CD8-positive, alpha-beta T cell (primary cell): ENCODE measurements at regions of chr11 and their contacts with region 1.

Region 1: DNA sequence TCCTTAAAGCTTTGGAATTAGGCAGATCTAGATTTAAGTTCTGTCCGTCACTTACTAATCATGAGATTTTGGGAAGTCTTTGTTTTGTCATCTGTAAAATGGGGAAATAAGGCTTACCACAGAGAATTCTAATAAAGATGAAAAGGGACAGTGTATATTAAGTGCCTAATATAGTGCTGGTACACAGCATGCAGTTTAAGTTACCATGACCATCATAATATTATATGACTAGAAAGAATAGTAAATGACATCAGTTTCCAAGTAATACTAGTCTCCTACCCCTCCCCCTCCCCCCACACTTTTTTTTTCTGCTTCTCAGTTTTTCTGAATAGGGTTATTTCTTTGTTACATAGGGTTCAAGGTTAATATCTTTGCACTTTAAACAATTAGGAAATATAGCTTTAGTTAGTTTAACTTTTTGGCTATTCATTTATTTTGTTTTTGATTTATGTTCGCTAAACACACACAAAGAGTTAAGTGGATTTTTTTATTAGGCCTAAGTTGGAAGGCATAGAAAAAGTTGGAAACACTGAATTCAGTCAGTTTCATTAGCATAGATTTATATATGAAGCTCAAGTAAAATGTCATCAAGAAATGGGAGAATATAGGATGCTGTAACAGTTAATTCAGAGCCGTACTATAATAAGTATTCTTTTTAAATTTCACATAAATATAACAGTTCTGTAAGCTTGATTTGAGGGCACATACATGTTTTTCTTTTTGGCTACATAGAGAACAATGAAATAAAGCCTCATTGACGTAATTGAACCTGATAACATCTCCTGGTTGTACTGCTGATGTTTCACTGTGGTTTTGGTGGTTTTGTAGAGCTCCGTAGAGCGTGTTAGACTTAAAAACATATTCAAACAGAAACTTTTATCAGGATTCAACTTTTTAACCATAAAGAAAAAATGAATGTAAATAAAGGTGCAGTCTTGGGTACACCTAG is 121.2 kb downstream of the PDE3B start:
- DNase-seq: peak in 5 of 9 experiments; percentile 22 to 96 (median 59)
- ATAC-seq: peak; percentile 75
- H3K4me3 ChIP-seq: peak overlapping the region in 1 of 2 experiments; percentile 3
- H3K4me3 Mint-ChIP-seq: peak overlapping the region; percentile 72
- H3K27ac ChIP-seq: peak overlapping the region; percentile 36 to 61
- H3K27ac Mint-ChIP-seq: no peak overlapping the region
- H3K4me1 ChIP-seq: peaks cover 86% of the 10 kb centered on the region
- H3K4me1 Mint-ChIP-seq: peaks cover 48% of the 10 kb centered on the region
- H3K27me3 ChIP-seq: peaks cover 0 to 3% of the 10 kb centered on the region in 2 experiments
- H3K27me3 Mint-ChIP-seq: no peaks in the 10 kb centered on the region
- CTCF ChIP-seq: no peak

Region 2: GRCh38 chr11:14519917-14520746 is 244.7 kb before region 1 on chr11 and contains the start of gene PSMA1:
- CTCF ChIA-PET with region 1: no interaction called
- POLR2A ChIA-PET with region 1: interaction called, 3 read pairs
- intact Hi-C with region 1: loop called (anchors 1 to 5 kb)
- DNase-seq: peak; percentile 74 to 95 (median 90)
- ATAC-seq: peak; percentile 90
- H3K4me3 ChIP-seq: peak within 1 kb of the TSS; percentile 82 to 84
- H3K4me3 Mint-ChIP-seq: peak within 1 kb of the TSS; percentile 98
- H3K27ac ChIP-seq: peak within 1 kb of the TSS; percentile 82 to 87
- H3K27ac Mint-ChIP-seq: peak within 1 kb of the TSS; percentile 97
- H3K4me1 ChIP-seq: peaks cover 19% of the 10 kb centered on the region
- H3K4me1 Mint-ChIP-seq: peaks cover 32% of the 10 kb centered on the region
- H3K27me3 ChIP-seq: no peaks in the 10 kb centered on the region
- H3K27me3 Mint-ChIP-seq: no peaks in the 10 kb centered on the region
- CTCF ChIP-seq: no peak
- total RNA-seq, gene PSMA1: 177 to 193 TPM

Region 3: DNA sequence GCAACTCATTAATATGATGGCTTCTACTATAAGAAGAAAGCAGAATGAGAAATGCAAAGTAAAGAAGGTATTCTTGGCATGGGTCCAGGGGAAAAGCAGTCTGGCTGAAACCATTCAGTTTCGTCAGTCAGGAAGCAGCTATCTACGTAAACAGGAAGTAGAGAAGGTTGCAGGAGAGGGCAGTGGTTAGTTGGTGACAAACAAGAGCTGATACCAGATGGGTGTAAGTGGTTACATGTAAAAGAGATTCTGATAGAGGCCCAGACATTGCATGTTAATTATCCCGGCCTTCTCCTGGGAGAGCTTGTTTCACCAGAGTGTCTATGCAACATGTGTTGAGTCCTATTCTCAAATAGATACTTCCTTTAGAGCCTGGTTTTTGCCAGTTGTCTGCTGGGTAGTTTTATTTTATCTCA is 186.3 kb before region 1 on chr11:
- CTCF ChIA-PET with region 1: interaction called, 5 read pairs
- POLR2A ChIA-PET with region 1: interaction called, 11 read pairs
- intact Hi-C with region 1: loop called (anchors 1 to 2 kb)
- DNase-seq: peak; percentile 32 to 98 (median 74)
- ATAC-seq: peak; percentile 90
- H3K4me3 ChIP-seq: no peak overlapping the region
- H3K4me3 Mint-ChIP-seq: peak overlapping the region; percentile 56
- H3K27ac ChIP-seq: peak overlapping the region; percentile 58 to 85
- H3K27ac Mint-ChIP-seq: peak overlapping the region; percentile 96
- H3K4me1 ChIP-seq: peaks cover 42% of the 10 kb centered on the region
- H3K4me1 Mint-ChIP-seq: peaks cover 64% of the 10 kb centered on the region
- H3K27me3 ChIP-seq: no peaks in the 10 kb centered on the region
- H3K27me3 Mint-ChIP-seq: no peaks in the 10 kb centered on the region
- CTCF ChIP-seq: no peak

Region 4: DNA sequence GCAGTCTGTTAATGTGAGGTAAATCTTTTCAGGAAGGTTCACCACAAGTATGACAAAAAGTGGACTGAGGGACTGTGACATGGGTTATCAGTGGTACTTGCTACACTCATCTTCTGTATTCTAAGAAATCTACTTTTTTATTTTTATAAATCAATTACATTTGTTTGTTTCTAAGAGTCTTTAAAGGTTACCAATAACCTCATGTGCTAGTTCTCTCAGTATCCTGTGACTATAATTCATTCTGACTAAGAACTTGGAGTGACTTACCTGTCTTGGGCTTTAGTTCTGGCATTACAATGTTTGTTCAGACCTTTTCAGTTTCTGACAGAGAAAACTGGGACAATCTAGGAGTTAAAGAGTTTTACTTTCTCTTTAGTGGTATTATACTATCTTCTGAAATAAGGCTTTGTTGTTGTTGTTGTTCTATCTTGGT is 12.9 kb before region 1 on chr11:
- CTCF ChIA-PET with region 1: no interaction called
- POLR2A ChIA-PET with region 1: interaction called, 5 read pairs
- intact Hi-C with region 1: loop called in 1 of 2 experiments (anchors 2 kb)
- DNase-seq: no peak
- ATAC-seq: peak; percentile 39
- H3K4me3 ChIP-seq: no peak overlapping the region
- H3K4me3 Mint-ChIP-seq: peak overlapping the region; percentile 40
- H3K27ac ChIP-seq: no peak overlapping the region
- H3K27ac Mint-ChIP-seq: peak overlapping the region; percentile 83
- H3K4me1 ChIP-seq: peaks cover 52% of the 10 kb centered on the region
- H3K4me1 Mint-ChIP-seq: peaks cover 63% of the 10 kb centered on the region
- H3K27me3 ChIP-seq: no peaks in the 10 kb centered on the region
- H3K27me3 Mint-ChIP-seq: no peaks in the 10 kb centered on the region
- CTCF ChIP-seq: no peak

Region 5: GRCh38 chr11:14835491-14836105 is 70.7 kb after region 1 on chr11:
- CTCF ChIA-PET with region 1: no interaction called
- POLR2A ChIA-PET with region 1: no interaction called
- intact Hi-C with region 1: no loop called
- DNase-seq: no peak
- ATAC-seq: no peak
- H3K4me3 ChIP-seq: no peak overlapping the region
- H3K4me3 Mint-ChIP-seq: no peak overlapping the region
- H3K27ac ChIP-seq: no peak overlapping the region
- H3K27ac Mint-ChIP-seq: no peak overlapping the region
- H3K4me1 ChIP-seq: no peaks in the 10 kb centered on the region
- H3K4me1 Mint-ChIP-seq: no peaks in the 10 kb centered on the region
- H3K27me3 ChIP-seq: no peaks in the 10 kb centered on the region
- H3K27me3 Mint-ChIP-seq: no peaks in the 10 kb centered on the region
- CTCF ChIP-seq: no peak

Region 6: GRCh38 chr11:14892036-14892567 is 127.2 kb after region 1 on chr11 and contains the start of gene CYP2R1:
- CTCF ChIA-PET with region 1: no interaction called
- POLR2A ChIA-PET with region 1: interaction called, 8 read pairs
- intact Hi-C with region 1: loop called (anchors 2 to 5 kb)
- DNase-seq: peak; percentile 81 to 95 (median 89)
- ATAC-seq: peak; percentile 74
- H3K4me3 ChIP-seq: peak within 1 kb of the TSS; percentile 68 to 75
- H3K4me3 Mint-ChIP-seq: peak within 1 kb of the TSS; percentile 88
- H3K27ac ChIP-seq: peak within 1 kb of the TSS; percentile 49 to 79
- H3K27ac Mint-ChIP-seq: peak within 1 kb of the TSS; percentile 93
- H3K4me1 ChIP-seq: peaks cover 10% of the 10 kb centered on the region
- H3K4me1 Mint-ChIP-seq: peaks cover 42% of the 10 kb centered on the region
- H3K27me3 ChIP-seq: no peaks in the 10 kb centered on the region
- H3K27me3 Mint-ChIP-seq: no peaks in the 10 kb centered on the region
- CTCF ChIP-seq: no peak
- total RNA-seq, gene CYP2R1: 10.7 to 12.6 TPM

Region 7: GRCh38 chr11:14932447-14932846 is 167.6 kb after region 1 on chr11:
- CTCF ChIA-PET with region 1: no interaction called
- POLR2A ChIA-PET with region 1: no interaction called
- intact Hi-C with region 1: no loop called
- DNase-seq: no peak
- ATAC-seq: no peak
- H3K4me3 ChIP-seq: no peak overlapping the region
- H3K4me3 Mint-ChIP-seq: no peak overlapping the region
- H3K27ac ChIP-seq: no peak overlapping the region
- H3K27ac Mint-ChIP-seq: no peak overlapping the region
- H3K4me1 ChIP-seq: no peaks in the 10 kb centered on the region
- H3K4me1 Mint-ChIP-seq: no peaks in the 10 kb centered on the region
- H3K27me3 ChIP-seq: no peaks in the 10 kb centered on the region
- H3K27me3 Mint-ChIP-seq: no peaks in the 10 kb centered on the region
- CTCF ChIP-seq: no peak